HEK293 (cell line): ENCODE measurements at regions of chr12 and their contacts with region 1.

Region 1: DNA sequence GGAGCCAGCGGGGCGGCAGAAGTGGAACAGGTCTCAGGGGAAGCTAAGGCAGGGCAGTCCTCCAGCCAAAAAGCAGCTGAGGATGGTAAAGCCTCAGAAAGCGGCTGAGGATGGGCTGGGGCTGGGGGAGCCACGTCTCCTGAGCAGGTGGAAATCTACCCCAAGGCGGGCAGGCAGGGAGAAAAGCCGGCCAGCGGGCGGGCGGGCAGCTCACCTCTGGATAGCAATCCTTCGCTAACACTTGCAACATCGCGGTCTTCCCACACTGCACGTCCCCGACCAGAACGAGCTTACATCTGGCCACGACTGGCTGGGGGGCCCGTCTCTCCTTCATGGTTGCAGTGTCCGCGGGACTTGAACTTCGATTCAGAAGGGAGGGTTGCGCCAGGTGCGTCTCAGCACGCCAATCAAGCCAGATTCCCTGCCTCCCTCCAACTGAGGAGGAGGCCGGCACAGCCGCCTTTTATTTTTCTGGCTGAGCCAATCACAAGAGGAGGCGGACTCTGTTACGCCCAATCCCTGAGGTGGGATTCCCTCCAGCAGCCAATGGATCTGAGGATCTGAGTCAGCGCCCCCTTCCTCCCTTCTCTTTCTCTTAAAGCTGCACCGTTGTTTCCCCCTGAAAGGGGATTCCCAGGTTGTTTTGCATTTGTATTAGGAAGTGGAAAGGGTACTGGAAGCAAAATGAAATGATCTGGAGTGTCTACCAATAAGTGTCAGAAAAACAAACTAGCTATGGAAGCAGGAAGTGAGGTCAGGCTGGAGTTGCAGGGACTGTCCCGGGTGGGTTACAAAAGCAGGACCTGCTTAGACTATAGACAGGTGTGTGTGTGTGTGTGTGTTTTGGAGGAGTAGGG is at the start of gene RND1:
- H3K4me3 ChIP-seq: peak within 1 kb of the TSS; percentile 43
- H3K27ac ChIP-seq: no peak within 1 kb of the TSS; the same call in 1 of the 2 replicates
- H3K4me1 ChIP-seq: peaks cover 6% of the 10 kb centered on the region
- CTCF ChIP-seq: no peak; the same call in 1 of the 2 replicates

Region 2: GRCh38 chr12:48882315-48882687 is 16.6 kb after region 1 on chr12:
- CTCF ChIA-PET with region 1: interaction called, 6 read pairs
- POLR2A ChIA-PET with region 1: interaction called, 24 read pairs
- H3K4me3 ChIP-seq: no peak overlapping the region
- H3K27ac ChIP-seq: no peak overlapping the region
- H3K4me1 ChIP-seq: peaks cover 20% of the 10 kb centered on the region
- CTCF ChIP-seq: no peak